ENCODE measurements at regions of chr3 and their contacts with region 1.

Region 1: DNA sequence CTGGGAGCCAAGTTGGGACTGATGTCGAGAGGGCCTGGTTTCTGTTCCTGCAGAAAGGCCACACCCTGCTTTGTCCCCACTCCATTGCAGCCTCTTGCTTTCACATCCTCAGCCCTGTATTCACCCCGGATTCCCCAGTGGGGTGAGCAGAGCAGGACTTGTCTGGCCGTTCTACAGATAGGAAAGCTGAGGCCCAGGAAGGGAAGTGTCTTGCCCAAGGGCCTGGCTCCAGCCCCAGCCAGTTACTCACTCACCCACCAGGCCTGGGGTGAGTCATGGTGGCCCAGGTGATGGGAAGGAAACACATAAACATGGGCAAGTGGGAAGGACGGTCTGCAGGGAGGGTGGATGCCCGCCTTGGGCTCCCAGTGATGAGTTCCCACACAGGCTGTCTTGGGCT is 6.1 kb upstream of the DUSP7 start:
- DNase-seq: peak; percentile 95 to 99 (median 97)
- H3K4me3 ChIP-seq: peak overlapping the region in 1 of 3 experiments; percentile 45
- H3K4me3 Mint-ChIP-seq: peak overlapping the region in 1 of 2 donors; percentile 51
- H3K27ac ChIP-seq: peak overlapping the region; percentile 83 to 84
- H3K27ac Mint-ChIP-seq: peak overlapping the region; percentile 87 to 97 (median 93)
- H3K4me1 ChIP-seq: peaks cover 50 to 59% of the 10 kb centered on the region in 2 donors
- H3K4me1 Mint-ChIP-seq: peaks cover 59% of the 10 kb centered on the region
- H3K27me3 ChIP-seq: no peaks in the 10 kb centered on the region
- H3K27me3 Mint-ChIP-seq: peaks cover 0 to 3% (median 1%) of the 10 kb centered on the region in 3 donors
- CTCF ChIP-seq: no peak

Region 2: GRCh38 chr3:51622868-51623267 is 439.6 kb before region 1 on chr3:
- intact Hi-C with region 1: no loop called
- DNase-seq: no peak
- H3K4me3 ChIP-seq: no peak overlapping the region
- H3K4me3 Mint-ChIP-seq: no peak overlapping the region
- H3K27ac ChIP-seq: peak overlapping the region in 1 of 2 donors; percentile 56
- H3K27ac Mint-ChIP-seq: peak overlapping the region in 5 of 7 donors; percentile 4 to 89 (median 30)
- H3K4me1 ChIP-seq: peaks cover 21 to 22% of the 10 kb centered on the region in 2 donors
- H3K4me1 Mint-ChIP-seq: peaks cover 34% of the 10 kb centered on the region
- H3K27me3 ChIP-seq: no peaks in the 10 kb centered on the region
- H3K27me3 Mint-ChIP-seq: no peaks in the 10 kb centered on the region
- CTCF ChIP-seq: no peak

Region 3: DNA sequence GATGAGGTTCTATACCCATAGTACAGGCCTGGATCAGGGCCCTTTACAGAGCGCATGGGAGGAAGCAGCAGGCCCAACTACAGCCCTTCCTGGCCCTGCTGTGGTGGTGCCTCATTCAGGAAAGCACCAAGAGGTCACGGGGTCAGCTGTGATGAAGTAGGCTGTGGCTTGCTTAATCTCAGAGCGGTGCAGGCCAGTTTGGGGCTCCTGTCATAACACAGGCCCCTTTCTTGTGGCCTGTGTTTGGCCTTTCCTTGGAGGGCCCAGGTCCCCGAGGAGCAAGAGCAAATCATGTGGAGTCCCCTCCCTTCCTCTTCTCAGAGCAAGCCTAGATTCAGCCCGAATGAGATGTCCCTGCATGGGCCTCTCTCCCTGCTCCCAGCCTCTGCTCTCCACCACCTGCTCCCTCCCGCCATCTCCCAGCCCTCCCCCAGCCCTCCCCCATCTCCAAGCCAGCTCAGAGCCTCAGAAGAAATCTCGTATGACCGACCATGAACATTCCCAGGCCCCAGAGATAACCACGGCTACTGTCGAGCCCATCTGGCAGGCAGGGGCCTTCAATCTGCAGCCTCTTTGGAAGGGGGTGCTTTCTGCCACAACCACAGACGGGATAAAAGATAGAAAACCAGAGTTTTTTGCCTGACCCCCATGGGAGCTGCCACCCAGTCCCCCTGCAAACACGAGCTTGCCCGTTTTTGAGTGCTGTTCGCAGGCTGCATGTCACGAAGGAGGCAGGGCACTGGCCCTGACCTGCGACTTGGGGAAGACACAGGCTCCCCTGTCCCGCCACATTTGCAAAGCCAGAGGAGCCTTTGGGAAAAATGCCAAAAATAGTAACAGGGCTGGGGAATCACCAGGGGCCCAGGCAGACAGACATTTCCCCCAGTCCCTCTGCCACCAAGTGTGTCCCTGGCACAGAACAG is 26.2 kb after region 1 on chr3:
- intact Hi-C with region 1: loop called in 1 of 2 experiments (anchors 2 kb)
- DNase-seq: peak; percentile 84 to 95 (median 84)
- H3K4me3 ChIP-seq: no peak overlapping the region
- H3K4me3 Mint-ChIP-seq: peak overlapping the region in 1 of 2 donors; percentile 30
- H3K27ac ChIP-seq: peak overlapping the region; percentile 84 to 86
- H3K27ac Mint-ChIP-seq: peak overlapping the region; percentile 78 to 95 (median 91)
- H3K4me1 ChIP-seq: peaks cover 42 to 54% of the 10 kb centered on the region in 2 donors
- H3K4me1 Mint-ChIP-seq: peaks cover 52% of the 10 kb centered on the region
- H3K27me3 ChIP-seq: no peaks in the 10 kb centered on the region
- H3K27me3 Mint-ChIP-seq: no peaks in the 10 kb centered on the region
- CTCF ChIP-seq: no peak

Region 4: DNA sequence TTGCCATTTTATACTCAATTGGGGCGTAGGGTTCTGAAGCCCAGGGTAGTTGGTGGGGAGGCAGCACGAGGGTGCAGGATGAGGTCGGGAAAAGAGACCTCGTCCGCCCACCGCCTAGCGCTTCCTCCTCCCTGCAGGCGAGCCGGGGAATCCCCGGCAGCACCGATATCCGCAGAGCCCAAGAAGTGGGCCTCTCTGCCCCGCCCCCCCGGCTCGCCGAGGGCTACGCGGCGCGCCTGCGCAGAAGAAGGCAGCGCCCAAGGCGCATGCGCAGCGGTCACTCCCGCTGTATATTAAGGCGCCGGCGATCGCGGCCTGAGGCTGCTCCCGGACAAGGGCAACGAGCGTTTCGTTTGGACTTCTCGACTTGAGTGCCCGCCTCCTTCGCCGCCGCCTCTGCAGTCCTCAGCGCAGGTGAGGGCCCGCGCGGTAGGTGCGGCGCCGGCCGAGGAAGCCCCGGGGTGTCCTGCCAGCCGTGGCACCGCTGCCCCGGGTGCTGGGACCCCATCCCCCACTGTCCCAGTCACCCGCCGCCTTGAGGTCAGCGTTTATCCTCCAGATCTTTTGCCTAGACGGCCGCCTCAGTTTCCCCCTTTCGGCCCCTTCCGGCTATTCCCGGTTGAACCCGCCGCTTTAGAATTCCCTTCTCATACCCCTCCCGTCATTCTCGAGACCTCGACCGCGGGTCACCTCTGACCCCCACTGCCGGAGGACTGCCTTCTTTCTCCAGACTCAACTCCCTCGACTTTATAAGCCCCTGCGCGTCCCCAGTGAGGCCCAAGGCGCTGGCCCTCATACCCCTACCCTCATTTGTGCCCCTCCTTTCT is 135.6 kb after region 1 on chr3 and contains the start of gene ALAS1:
- intact Hi-C with region 1: loop called in 1 of 2 experiments (anchors 5 kb)
- DNase-seq: peak; percentile 92 to 93 (median 93)
- H3K4me3 ChIP-seq: peak within 1 kb of the TSS; percentile 66 to 86 (median 80)
- H3K4me3 Mint-ChIP-seq: peak within 1 kb of the TSS; percentile 97 to 98
- H3K27ac ChIP-seq: peak within 1 kb of the TSS; percentile 76 to 83
- H3K27ac Mint-ChIP-seq: peak within 1 kb of the TSS; percentile 92 to 98 (median 94)
- H3K4me1 ChIP-seq: peaks cover 73 to 78% of the 10 kb centered on the region in 2 donors
- H3K4me1 Mint-ChIP-seq: peaks cover 73% of the 10 kb centered on the region
- H3K27me3 ChIP-seq: no peaks in the 10 kb centered on the region
- H3K27me3 Mint-ChIP-seq: peaks cover 0 to under 1% (median 0%) of the 10 kb centered on the region in 3 donors
- CTCF ChIP-seq: no peak
- polyA plus RNA-seq, gene ALAS1: 20.9 to 84.7 (median 38.7) TPM

Measured in CD14-positive monocyte (primary cell).